Common myeloid progenitor, CD34-positive (primary cell): ENCODE measurements at regions of chr10 and their contacts with region 1.

Region 1: DNA sequence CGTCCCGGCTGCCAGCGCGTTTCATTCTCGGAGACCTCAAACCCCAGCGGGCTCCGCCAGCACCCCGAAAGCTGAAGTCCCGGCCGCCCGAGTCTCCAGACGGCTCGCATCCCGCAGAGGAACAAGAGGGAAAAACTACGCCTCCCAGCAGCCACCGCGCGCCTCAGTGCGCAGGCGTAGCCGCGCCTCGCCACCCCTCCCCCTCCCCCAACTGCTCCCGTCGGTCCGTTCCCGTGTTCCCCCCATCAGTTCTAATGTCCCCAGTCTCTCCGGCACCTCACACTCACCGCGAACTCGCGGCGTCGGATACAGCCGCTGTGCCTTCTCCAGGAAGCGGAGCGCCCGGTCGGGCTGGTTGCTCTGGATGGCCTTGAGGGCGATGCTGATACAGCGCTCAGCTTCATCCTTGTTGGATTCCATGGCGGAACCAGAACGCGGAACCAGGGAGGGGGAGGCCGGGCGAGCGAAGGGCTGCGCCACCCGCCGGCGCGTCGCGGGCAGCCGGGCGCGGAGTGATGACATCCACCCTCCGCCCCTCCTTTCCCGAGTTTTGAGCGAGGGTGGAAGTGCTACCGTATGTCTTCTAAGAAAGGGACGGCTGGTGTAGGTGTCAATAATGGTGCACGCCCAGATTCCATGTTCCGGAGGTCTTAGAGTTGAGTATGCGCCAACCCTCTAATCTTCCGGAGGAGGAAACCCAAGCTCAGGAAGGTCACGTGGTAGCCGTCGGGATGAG is at the start of gene DNAJB12:
- DNase-seq: peak; percentile 95 to 97 (median 97)
- H3K4me3 ChIP-seq: peak within 1 kb of the TSS; percentile 71 to 100 (median 93)
- H3K27ac ChIP-seq: peak within 1 kb of the TSS; percentile 95 to 97
- H3K4me1 ChIP-seq: peaks cover 4 to 17% (median 11%) of the 10 kb centered on the region in 4 experiments
- H3K27me3 ChIP-seq: no peaks in the 10 kb centered on the region

Region 2: DNA sequence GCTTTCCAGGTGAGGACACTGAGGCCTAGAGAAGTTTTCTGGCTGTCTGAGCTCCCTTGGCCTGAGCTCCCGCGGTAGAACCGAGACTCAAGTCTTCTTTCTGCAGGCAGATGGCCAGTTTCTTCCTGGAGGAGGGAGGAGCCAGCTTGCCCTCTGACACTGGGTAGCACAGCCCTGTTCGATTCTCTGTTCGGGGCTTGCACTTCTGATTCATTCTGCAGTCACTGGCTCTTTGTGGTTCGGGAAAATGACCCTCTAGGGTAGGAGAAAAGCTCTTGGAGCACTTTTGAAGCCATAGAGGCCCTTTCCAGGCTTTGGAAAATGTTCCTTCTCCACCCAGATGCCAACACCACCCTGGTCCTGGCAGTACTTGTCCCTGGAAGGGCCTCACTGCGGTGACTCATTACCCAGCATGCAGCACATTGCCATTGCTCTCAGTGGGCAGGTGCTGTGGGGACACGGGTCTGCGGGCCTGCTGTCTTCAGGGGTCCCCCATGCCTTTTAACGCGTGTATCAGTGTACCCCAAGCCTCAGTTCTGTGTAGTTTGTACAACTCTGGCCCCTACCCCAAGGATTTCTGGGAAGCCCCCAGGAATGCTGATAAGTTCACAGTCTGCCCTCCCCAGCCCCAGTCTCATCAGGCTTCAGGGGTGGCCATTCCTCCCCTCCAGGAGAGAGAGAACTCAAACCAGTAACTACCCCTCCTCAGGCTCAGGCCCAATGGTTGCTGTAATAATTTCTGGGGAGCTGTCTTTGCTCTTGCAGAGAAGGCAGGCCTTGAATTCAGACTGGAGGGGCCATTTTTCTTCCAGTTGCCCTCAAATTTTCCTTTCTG is 378.5 kb before region 1 on chr10:
- CTCF ChIA-PET with region 1: no interaction called
- POLR2A ChIA-PET with region 1: interaction called, 10 read pairs
- DNase-seq: no peak
- H3K4me3 ChIP-seq: no peak overlapping the region
- H3K27ac ChIP-seq: no peak overlapping the region
- H3K4me1 ChIP-seq: peaks cover 0 to 2% (median 0%) of the 10 kb centered on the region in 4 experiments
- H3K27me3 ChIP-seq: peaks cover 0 to 4% (median 0%) of the 10 kb centered on the region in 5 experiments